Aorta (tissue), 5 donors: ENCODE measurements at regions of chr21 and their contacts with region 1.

Region 1: GRCh38 chr21:32135401-32136363 is 143.2 kb downstream of the MIS18A start:
- DNase-seq: peak; percentile 68 to 77
- ATAC-seq: peak; percentile 69
- H3K4me3 ChIP-seq: no peak overlapping the region
- H3K27ac ChIP-seq: peak overlapping the region in 1 of 2 donors; percentile 30
- H3K4me1 ChIP-seq: no peaks in the 10 kb centered on the region
- H3K27me3 ChIP-seq: no peaks in the 10 kb centered on the region

Region 2: DNA sequence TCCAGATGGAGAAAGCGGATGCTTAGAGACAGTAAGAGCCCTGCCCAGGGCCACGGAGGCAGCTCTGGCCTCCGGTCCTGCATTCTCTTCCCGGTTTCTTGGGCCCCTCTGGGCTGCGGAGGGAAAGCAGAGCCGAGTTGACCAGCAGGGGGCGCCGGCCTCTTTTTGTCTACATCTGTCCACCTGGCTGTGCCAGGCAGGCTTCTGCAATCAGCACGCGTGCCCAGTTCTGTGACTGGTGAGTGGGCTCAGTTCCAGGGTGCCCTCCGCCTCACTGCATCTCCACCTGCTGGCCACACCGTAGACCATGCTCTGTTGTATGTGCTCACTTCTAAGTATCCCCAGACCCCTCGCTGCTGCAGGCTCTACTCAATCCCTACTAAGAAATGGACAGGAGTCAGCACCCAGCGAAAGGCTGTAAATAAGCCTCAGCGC is 269.6 kb before region 1 on chr21:
- intact Hi-C with region 1: loop called in 1 of 2 experiments (anchors 10 kb)
- DNase-seq: peak; percentile 89 to 96
- ATAC-seq: peak; percentile 88
- H3K4me3 ChIP-seq: no peak overlapping the region
- H3K27ac ChIP-seq: no peak overlapping the region
- H3K4me1 ChIP-seq: no peaks in the 10 kb centered on the region
- H3K27me3 ChIP-seq: no peaks in the 10 kb centered on the region

Region 3: GRCh38 chr21:32070676-32071330 is 64.9 kb before region 1 on chr21:
- intact Hi-C with region 1: no loop called
- DNase-seq: no peak
- ATAC-seq: no peak
- H3K4me3 ChIP-seq: no peak overlapping the region
- H3K27ac ChIP-seq: no peak overlapping the region
- H3K4me1 ChIP-seq: no peaks in the 10 kb centered on the region
- H3K27me3 ChIP-seq: no peaks in the 10 kb centered on the region